ENCODE measurements at regions of chr11 and their contacts with region 1.

Region 1: DNA sequence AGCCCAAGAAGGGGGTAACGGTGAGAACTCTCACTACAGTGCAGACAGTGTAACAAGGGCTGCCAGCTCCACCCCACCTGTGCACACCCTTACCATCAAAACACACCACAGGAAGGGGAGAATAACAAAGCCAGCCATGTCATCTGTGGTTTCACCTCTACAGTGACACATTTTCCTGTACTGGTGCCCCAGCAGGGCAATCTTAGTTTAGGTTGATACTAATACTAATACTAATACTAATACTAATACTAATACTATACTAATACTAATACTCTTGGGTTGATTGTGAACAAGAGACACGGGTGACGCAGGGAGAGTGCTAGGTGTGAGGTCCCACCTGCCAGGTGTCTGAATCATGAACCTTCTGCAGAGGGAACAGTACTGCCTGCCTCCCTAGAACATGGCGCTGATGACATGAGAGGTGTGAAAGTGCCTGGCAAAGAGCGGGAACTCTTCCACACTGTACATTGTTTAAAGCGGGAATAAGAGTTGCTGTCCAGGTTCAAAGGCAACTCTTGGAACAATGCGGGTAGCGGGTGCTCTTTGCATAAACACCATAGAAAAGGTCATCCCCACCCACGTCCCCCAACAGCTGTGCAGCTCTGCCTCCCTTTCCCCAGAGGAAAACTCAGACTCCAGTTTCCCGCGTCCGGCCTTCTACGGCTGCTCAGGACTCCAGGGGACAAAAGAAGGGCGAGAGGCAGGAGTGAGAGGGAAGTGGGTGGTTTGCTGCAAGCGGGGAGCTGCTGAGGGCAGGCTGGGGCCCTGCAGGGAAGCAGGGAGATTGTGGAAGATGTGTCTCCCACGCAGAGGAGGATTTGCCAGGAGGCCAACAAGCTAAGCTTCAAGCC is 25.0 kb upstream of the TMPRSS4 start:
- DNase-seq: peak; percentile 32 to 90 (median 79)
- ATAC-seq: peak; percentile 95 to 97
- H3K4me3 Mint-ChIP-seq: peak overlapping the region; percentile 54 to 94 (median 82)
- H3K27ac Mint-ChIP-seq: peak overlapping the region; percentile 90 to 100 (median 98)
- H3K4me1 Mint-ChIP-seq: peaks cover 37 to 62% (median 60%) of the 10 kb centered on the region in 4 donors
- H3K27me3 Mint-ChIP-seq: peaks cover 0 to 2% (median 0%) of the 10 kb centered on the region in 5 donors

Region 2: DNA sequence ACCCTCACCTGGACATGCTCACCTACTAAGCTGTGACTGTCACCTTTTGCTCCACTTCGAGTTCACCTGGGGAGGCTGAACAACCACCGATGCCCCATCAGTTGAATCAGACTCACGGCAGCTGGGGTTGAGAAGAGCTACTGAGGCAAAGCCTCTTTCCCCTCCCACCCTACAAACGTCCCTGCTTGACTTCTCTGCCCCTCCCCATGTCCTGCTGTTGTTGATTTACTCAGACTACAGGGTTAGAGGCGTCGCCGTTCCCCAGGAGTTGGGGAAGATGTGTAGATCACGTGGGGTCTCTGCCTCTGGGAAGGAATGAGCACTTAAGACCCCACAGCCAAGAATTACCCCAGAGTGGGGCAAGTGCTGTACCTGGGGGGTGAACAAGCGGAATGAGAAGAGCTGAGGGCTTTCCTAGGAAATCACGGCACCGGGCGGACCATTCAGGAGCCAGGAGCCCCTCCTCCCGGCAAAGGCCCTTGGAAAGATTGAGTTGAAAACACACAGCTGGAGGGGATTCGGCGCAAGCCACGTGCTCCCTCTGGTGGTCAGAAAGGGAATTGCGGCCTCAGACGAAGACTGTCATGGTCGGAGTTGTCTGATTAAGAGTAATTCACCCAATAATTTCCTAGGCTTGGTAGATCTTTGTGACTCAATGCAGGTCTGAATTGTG is 234.3 kb before region 1 on chr11:
- POLR2A ChIA-PET with region 1: interaction called, 34 read pairs
- DNase-seq: peak; percentile 66 to 88 (median 79)
- ATAC-seq: peak in 1 of 2 donors; percentile 16
- H3K4me3 Mint-ChIP-seq: peak overlapping the region in 9 of 10 donors; percentile 48 to 79 (median 64)
- H3K27ac Mint-ChIP-seq: peak overlapping the region; percentile 71 to 94 (median 86)
- H3K4me1 Mint-ChIP-seq: peaks cover 28 to 62% (median 52%) of the 10 kb centered on the region in 4 donors
- H3K27me3 Mint-ChIP-seq: no peaks in the 10 kb centered on the region

Region 3: DNA sequence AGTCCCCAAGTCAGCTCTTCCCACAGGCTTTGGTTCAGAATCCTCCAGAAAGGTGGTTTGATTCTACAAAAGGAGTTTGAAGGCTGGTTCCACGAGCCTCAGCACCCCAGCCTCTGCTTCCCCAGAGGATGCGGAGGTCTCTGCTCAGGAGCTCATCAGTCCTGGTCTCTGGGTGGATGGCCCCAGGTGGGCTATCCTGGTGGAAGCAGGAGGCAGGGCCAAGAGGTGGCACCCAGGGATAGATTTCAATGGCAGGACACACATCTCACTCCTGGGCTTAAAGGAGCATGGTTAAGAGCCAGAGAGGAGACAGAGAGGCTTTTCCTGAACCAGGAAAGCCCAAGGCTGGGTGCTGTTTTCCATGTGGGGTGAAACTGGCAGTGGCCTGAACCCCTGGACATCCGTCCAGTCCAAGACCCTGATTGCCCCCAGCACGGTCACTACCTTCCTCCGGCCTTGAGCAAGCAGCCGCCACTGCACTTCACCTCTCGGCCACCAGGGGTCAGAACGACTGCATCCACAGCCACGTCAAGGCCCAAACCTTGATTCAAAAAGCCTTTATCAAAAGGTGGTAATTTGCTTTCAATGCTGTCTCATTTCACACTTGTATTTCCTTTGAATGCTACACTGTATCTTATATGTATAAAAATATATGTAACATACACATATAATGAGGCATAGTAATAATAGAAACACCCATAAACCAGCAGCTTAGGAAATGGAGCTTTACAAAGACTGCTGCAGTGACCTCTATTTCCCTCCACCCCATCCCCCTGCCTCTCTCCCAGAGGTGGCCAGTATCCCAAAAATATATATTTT is 208.0 kb before region 1 on chr11:
- POLR2A ChIA-PET with region 1: interaction called, 27 read pairs
- DNase-seq: peak; percentile 56 to 88 (median 77)
- ATAC-seq: peak; percentile 77 to 88
- H3K4me3 Mint-ChIP-seq: no peak overlapping the region
- H3K27ac Mint-ChIP-seq: peak overlapping the region in 1 of 10 donors; percentile 43
- H3K4me1 Mint-ChIP-seq: peaks cover 0 to 10% (median 3%) of the 10 kb centered on the region in 4 donors
- H3K27me3 Mint-ChIP-seq: no peaks in the 10 kb centered on the region

Region 4: DNA sequence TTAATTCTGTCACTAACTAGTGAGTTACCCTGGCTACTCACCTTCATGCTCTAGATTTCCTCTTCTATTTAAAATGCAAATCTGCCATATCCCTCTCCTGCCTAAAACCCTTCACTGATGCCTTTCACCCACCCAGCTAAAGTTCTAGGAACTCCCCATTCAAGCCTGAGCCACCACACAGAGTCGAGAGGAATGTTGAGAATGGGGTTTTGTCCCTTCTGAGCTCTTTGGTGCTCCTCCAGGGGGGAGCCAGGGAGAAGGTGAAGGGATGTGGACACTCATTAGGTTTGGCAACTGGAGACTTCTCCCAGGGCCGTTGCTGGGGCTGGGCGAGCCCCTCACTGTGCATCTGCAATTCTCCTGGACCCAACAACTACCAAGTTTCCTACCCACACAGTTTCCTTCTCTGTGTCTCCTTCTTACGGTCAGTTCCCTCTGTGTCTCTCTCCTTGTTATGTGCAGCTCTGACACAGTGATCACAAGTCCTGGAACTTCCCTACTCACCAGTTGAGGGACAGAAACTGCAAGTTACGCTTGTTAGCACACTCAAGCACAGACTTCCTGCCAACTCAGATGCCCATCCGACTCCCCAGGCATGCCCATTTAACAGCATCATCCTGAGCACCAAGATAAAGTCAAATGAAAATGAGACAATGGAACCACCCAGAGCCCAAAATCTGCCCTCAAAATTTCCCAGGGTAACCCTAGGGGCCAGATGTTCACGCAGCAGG is 72.2 kb before region 1 on chr11:
- POLR2A ChIA-PET with region 1: interaction called, 631 read pairs
- DNase-seq: no peak
- ATAC-seq: peak; percentile 45 to 67
- H3K4me3 Mint-ChIP-seq: peak overlapping the region; percentile 2 to 67 (median 41)
- H3K27ac Mint-ChIP-seq: peak overlapping the region; percentile 24 to 91 (median 74)
- H3K4me1 Mint-ChIP-seq: peaks cover 38 to 87% (median 69%) of the 10 kb centered on the region in 4 donors
- H3K27me3 Mint-ChIP-seq: no peaks in the 10 kb centered on the region

Region 5: GRCh38 chr11:117985953-117986887 is 65.6 kb before region 1 on chr11 and contains the start of gene IL10RA:
- POLR2A ChIA-PET with region 1: interaction called, 631 read pairs
- DNase-seq: peak; percentile 69 to 84 (median 80)
- ATAC-seq: peak; percentile 78 to 79
- H3K4me3 Mint-ChIP-seq: peak within 1 kb of the TSS; percentile 88 to 98 (median 93)
- H3K27ac Mint-ChIP-seq: peak within 1 kb of the TSS; percentile 89 to 99 (median 94)
- H3K4me1 Mint-ChIP-seq: peaks cover 41 to 86% (median 71%) of the 10 kb centered on the region in 4 donors
- H3K27me3 Mint-ChIP-seq: no peaks in the 10 kb centered on the region
- polyA plus RNA-seq, gene IL10RA: 99.2 to 185 (median 147) TPM

Region 6: DNA sequence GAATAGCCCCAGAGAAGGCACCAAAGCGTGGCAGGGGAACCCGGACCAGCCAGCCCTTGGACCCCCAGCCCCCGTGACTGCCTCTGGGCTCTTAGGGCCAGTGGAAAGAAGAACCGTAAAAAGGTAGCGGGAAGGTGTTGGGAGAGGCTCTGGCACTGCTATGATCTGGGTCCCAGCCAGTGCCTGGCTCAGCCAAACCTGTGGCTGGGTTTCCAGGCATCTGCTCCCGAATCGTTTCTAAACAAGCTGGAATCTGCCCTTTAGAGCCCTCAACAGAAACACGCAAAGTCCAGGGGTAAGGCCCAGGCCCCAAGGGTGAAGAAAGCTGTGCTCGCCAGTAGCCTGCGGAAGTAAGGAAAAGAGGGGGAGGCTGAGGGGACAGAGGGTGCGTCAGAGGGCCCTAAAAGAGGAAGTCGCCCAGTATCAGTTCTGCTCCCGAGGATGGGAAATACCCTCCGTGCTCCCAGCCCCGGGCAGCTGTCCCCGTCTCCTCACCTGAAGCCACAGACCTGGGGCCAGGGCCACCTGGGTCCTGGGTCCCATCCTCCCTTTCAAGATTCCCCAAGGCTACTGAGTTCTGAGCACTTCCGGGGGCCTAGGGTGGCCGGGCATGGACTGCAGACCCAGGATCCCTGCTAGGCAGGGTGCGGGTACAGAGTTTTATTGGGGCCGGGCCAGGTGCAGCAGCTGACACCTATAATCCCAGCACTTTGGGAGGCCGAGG is 40.9 kb before region 1 on chr11:
- POLR2A ChIA-PET with region 1: interaction called, 631 read pairs
- DNase-seq: peak in 1 of 10 donors; percentile 54
- ATAC-seq: peak; percentile 15 to 16
- H3K4me3 Mint-ChIP-seq: peak overlapping the region in 5 of 10 donors; percentile 28 to 66 (median 47)
- H3K27ac Mint-ChIP-seq: peak overlapping the region in 9 of 10 donors; percentile 60 to 100 (median 94)
- H3K4me1 Mint-ChIP-seq: peaks cover 68 to 100% (median 99%) of the 10 kb centered on the region in 4 donors
- H3K27me3 Mint-ChIP-seq: no peaks in the 10 kb centered on the region

Region 7: DNA sequence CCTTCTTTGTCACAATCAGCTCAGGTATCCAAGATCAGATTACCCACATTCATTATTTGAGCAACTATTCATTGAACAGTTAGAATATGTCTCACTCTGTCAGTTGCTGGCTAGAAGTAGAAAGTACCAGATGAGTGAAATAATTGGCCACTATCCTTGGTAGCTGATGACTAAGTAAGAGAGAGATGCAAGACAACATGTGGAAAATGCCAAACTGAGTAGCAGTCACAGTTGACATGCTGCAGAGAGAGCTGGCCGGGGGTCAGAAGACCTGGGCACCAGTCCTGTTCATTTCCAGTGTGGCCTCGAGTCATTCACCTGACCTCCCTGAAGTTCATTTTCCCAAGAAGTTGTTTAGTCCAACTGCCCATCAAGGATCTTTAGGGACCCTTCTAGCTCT is 57.4 kb after region 1 on chr11:
- POLR2A ChIA-PET with region 1: no interaction called
- DNase-seq: no peak
- ATAC-seq: no peak
- H3K4me3 Mint-ChIP-seq: no peak overlapping the region
- H3K27ac Mint-ChIP-seq: no peak overlapping the region
- H3K4me1 Mint-ChIP-seq: peaks cover 0 to 3% (median 1%) of the 10 kb centered on the region in 4 donors
- H3K27me3 Mint-ChIP-seq: peaks cover 0 to 5% (median 3%) of the 10 kb centered on the region in 5 donors

Measured in naive thymus-derived CD8-positive, alpha-beta T cell (primary cell).